Heart left ventricle (tissue), 16 donors: ENCODE measurements at regions of chr6 and their contacts with region 1.

Region 1: DNA sequence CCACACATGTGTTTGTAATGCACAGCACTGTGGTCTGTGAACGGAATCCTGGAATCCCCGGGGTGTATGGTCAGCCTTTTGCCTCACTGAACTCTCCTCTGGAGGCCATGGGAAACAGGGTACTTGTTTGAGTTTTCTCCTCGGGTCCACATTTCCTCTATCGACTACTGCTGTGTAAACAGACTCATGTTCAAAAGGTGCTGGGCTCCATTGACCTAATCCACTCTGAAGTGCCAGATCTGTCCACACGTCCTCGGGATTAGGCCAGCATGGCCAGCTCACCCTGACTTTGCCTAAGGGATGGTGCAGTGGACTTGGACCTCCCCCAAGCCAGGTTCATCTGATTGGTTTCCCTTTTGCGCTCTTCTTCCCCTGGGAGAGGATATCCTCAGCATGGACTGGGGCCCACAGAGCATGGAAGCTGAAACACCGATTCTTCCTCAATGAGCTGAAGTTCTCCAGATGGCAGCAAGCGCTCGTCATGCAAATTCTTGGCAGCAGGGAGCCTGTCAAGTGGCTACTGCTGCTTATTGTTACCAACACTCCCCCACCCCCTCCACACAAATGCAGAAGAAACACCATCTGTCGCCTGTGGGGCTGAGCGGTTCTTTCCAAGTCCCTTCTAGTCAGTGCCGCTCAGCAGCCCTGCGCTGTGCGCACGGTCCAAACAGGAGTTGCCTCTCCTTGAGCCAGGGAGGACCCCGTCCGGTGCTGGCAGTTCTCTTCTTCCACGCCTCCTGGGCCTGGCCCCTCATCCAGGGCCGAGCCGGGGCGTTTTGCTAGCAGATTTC is 292.6 kb upstream of the MARCKS start:
- DNase-seq: peak; percentile 88 to 94 (median 89)
- ATAC-seq: peak; percentile 99 to 100 (median 100)
- H3K4me3 ChIP-seq: peak overlapping the region in 10 of 12 donors; percentile 23 to 50 (median 40)
- H3K27ac ChIP-seq: peak overlapping the region; percentile 8 to 87 (median 82)
- H3K4me1 ChIP-seq: peaks cover 0 to 18% (median 10%) of the 10 kb centered on the region in 12 donors
- H3K27me3 ChIP-seq: no peaks in the 10 kb centered on the region
- CTCF ChIP-seq: peak in 7 of 12 donors; percentile 16 to 47 (median 25)
- POLR2A ChIP-seq: no peak

Region 2: GRCh38 chr6:113182370-113183141 is 382.0 kb before region 1 on chr6:
- intact Hi-C with region 1: loop called in 1 of 10 experiments (anchors 10 kb)
- DNase-seq: no peak
- ATAC-seq: no peak
- H3K4me3 ChIP-seq: no peak overlapping the region
- H3K27ac ChIP-seq: peak overlapping the region in 1 of 12 donors; percentile 39
- H3K4me1 ChIP-seq: peaks cover 0 to 17% (median 7%) of the 10 kb centered on the region in 12 donors
- H3K27me3 ChIP-seq: no peaks in the 10 kb centered on the region
- CTCF ChIP-seq: no peak
- POLR2A ChIP-seq: no peak

Region 3: DNA sequence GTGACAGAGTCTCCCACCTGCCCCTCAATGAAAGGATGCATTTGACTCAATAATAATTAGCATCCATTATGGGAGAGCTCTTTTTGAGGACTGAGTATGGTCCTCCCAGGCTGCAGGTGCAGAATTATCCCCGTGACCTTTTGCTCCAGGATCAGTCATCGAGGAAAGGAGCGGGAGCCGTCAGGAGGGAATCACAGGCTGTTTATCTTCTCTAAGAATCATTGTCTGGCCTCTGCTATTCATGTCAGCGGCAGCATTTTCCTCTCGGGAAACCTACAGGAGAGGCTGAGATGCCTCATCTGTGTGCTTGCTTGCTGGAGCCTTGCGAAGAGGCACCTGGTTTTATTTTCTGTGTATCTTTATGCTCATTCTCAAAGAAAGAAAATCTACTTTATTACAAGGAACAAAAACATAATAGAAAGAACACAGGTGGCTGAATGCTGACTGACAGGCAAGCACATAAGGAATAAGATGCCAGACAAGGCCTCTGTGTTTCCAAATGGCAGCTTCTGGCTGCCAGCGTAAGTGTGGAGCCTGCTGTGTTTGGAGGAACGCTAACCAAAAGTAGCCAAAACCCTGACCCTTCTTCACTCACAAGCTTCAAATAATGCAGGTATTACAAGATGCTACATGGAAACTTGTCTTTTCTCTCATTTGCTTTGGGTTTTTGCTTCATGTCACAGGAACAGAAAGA is 246.5 kb before region 1 on chr6:
- intact Hi-C with region 1: no loop called
- DNase-seq: no peak
- ATAC-seq: no peak
- H3K4me3 ChIP-seq: no peak overlapping the region
- H3K27ac ChIP-seq: no peak overlapping the region
- H3K4me1 ChIP-seq: peaks cover 0 to 12% (median 0%) of the 10 kb centered on the region in 12 donors
- H3K27me3 ChIP-seq: no peaks in the 10 kb centered on the region
- CTCF ChIP-seq: no peak
- POLR2A ChIP-seq: no peak